Heart left ventricle (tissue), 16 donors: ENCODE measurements at regions of chrX and their contacts with region 1.

Region 1: GRCh38 chrX:115067812-115068211 is 50.4 kb upstream of the IL13RA2 start:
- DNase-seq: no peak
- ATAC-seq: no peak
- H3K4me3 ChIP-seq: no peak overlapping the region
- H3K27ac ChIP-seq: peak overlapping the region in 5 of 12 donors; percentile 10 to 60 (median 48)
- H3K4me1 ChIP-seq: peaks cover 0 to 11% (median 0%) of the 10 kb centered on the region in 12 donors
- H3K27me3 ChIP-seq: peaks cover 0 to 13% (median 0%) of the 10 kb centered on the region in 9 donors
- CTCF ChIP-seq: no peak
- POLR2A ChIP-seq: no peak

Region 2: DNA sequence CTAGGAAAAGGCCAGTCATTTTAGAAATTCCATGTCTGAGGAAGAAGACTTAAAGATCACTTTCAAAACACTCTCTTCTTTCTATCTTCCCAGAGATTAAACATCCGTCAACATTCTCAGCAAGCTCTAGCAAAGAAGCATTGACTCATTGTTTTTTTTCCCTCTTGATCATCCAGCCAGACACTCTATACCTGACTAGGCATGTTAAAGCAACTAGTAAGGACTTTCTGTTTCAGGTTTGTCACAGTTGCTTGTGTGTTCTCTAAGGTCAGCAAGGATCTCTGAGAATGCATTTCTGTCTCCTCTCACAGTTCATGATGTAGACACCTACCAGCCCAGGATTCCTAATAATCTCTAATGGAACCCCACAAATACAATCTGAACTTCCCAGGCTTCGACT is 162.6 kb before region 1 on chrX:
- intact Hi-C with region 1: no loop called
- DNase-seq: no peak
- ATAC-seq: no peak
- H3K4me3 ChIP-seq: no peak overlapping the region
- H3K27ac ChIP-seq: no peak overlapping the region
- H3K4me1 ChIP-seq: no peaks in the 10 kb centered on the region
- H3K27me3 ChIP-seq: peaks cover 0 to 7% (median 0%) of the 10 kb centered on the region in 9 donors
- CTCF ChIP-seq: no peak
- POLR2A ChIP-seq: no peak

Region 3: DNA sequence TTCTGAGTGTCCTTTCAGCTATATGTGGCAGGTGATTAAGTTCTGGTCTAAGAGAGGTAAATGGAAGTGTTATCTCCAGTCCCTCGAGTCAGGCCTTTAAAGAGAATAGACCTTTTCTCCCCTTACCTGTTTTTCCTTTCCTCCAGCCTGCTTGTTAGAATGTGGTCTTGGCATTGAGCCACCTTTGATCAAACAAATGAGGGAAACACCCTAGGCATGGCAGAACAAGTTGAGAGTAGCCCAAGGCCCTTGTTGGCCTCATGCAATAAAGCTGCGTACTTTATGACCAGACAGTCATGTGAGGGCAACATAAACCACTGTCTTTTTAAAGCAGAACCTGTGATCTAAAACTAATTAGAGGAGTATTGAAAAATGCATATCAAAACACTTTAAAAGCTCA is 37.2 kb before region 1 on chrX:
- intact Hi-C with region 1: loop called in 1 of 10 experiments (anchors 5 kb)
- DNase-seq: peak in 1 of 5 donors; percentile 5
- ATAC-seq: no peak
- H3K4me3 ChIP-seq: no peak overlapping the region
- H3K27ac ChIP-seq: peak overlapping the region in 5 of 12 donors; percentile 18 to 63 (median 52)
- H3K4me1 ChIP-seq: peaks cover 0 to 10% (median 0%) of the 10 kb centered on the region in 12 donors
- H3K27me3 ChIP-seq: peaks cover 0 to 10% (median 0%) of the 10 kb centered on the region in 9 donors
- CTCF ChIP-seq: no peak
- POLR2A ChIP-seq: no peak